ENCODE measurements at regions of chr10 and their contacts with region 1.

Region 1: GRCh38 chr10:88990384-88991160 is at the start of gene FAS:
- DNase-seq: peak; percentile 96
- H3K4me3 Mint-ChIP-seq: peak within 1 kb of the TSS; percentile 92
- H3K27ac Mint-ChIP-seq: peak within 1 kb of the TSS; percentile 98
- H3K4me1 Mint-ChIP-seq: peaks cover 46% of the 10 kb centered on the region
- H3K27me3 Mint-ChIP-seq: no peaks in the 10 kb centered on the region
- total RNA-seq, gene FAS: 69.3 to 72.9 TPM

Region 2: DNA sequence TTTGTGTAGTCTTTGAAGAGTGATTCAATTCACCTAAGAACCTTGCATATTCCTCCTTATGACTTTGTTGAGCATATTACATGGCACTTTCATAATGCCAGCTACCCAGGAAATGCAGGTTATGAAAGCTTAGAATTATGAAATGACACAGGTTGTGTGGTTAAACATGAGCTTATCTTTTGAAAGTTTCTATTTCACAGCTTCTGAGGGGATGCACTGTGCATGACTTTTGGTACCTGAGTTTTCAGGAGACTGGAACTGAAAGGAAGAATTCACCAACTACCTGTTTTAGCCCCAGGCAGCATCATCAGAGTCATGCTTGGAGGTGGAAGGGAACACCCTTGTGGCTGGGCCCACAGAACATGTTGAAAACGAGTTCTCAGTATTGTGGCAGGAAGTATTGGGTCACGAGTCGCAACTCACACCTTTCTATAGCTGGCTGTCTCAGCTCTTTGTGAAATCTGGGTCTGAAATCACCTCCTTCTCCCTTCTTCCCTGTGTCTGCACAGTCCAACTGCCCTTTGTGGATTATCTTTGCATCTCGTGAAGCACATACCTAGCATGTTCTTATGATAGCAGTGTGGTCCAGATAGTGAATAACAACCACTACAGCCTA is 899.0 kb before region 1 on chr10:
- CTCF ChIA-PET with region 1: no interaction called
- intact Hi-C with region 1: loop called (anchors 1 kb)
- DNase-seq: peak; percentile 91
- H3K4me3 Mint-ChIP-seq: no peak overlapping the region
- H3K27ac Mint-ChIP-seq: no peak overlapping the region
- H3K4me1 Mint-ChIP-seq: peaks cover 34% of the 10 kb centered on the region
- H3K27me3 Mint-ChIP-seq: peaks cover 19% of the 10 kb centered on the region

Region 3: GRCh38 chr10:88848499-88848898 is 142.1 kb before region 1 on chr10:
- CTCF ChIA-PET with region 1: interaction called, 3 read pairs
- intact Hi-C with region 1: loop called (anchors 1 kb)
- DNase-seq: no peak
- H3K4me3 Mint-ChIP-seq: no peak overlapping the region
- H3K27ac Mint-ChIP-seq: peak overlapping the region; percentile 25
- H3K4me1 Mint-ChIP-seq: peaks cover 13% of the 10 kb centered on the region
- H3K27me3 Mint-ChIP-seq: peaks cover 12% of the 10 kb centered on the region

Region 4: DNA sequence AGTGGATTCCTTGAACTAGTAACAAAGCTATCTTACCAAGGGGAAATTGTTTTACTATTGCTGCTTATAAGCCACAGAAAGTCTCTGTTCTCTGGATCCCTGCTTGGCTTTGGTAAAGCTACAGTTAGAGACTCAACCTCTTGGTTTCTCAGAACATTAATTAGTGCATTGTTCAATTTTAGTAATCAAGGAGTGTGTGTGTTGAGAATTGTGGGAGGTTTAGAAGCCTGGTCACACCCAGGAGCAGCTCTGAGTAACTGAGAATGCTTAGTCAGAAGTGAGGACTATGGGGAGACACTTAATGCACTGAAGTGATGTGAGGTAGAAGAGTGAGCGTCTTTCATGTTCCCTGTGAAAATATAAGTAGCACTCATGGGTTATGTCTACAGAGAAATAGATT is 29.8 kb before region 1 on chr10:
- CTCF ChIA-PET with region 1: interaction called, 4 read pairs
- intact Hi-C with region 1: loop called (anchors 1 kb)
- DNase-seq: peak; percentile 32
- H3K4me3 Mint-ChIP-seq: no peak overlapping the region
- H3K27ac Mint-ChIP-seq: no peak overlapping the region
- H3K4me1 Mint-ChIP-seq: peaks cover 24% of the 10 kb centered on the region
- H3K27me3 Mint-ChIP-seq: no peaks in the 10 kb centered on the region

Region 5: DNA sequence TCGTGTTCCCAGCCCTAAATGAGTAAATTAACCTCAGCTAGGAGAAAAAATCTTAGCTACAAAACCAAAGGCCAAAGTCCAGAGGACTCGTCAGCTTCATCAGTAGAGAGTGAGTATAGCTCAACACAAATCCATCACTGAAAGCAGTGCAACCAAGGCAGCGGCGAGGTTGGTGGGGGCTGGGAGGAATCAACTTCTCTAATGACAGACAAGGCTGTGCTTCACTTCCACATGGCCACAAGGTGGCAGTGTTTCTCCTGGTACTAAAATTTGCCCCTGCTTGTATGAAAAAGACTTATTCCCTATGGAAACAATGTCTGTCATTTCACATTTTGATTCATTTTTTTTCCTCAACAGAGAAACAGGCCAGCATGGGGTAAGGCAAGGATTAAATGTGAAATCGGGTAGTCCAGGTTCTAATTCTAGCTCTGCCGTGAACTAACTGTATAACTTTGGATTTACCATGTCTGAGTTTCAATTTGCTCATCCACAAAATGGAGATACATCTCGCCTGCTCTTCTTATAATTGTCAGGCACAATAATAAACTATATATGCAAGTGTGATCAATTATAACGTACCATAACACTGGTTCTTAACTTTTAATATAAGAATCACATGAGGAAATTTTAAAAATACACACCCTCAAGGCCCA is 39.3 kb after region 1 on chr10:
- CTCF ChIA-PET with region 1: interaction called, 9 read pairs
- intact Hi-C with region 1: loop called (anchors 2 kb)
- DNase-seq: peak; percentile 85
- H3K4me3 Mint-ChIP-seq: no peak overlapping the region
- H3K27ac Mint-ChIP-seq: no peak overlapping the region
- H3K4me1 Mint-ChIP-seq: peaks cover 22% of the 10 kb centered on the region
- H3K27me3 Mint-ChIP-seq: no peaks in the 10 kb centered on the region

Region 6: DNA sequence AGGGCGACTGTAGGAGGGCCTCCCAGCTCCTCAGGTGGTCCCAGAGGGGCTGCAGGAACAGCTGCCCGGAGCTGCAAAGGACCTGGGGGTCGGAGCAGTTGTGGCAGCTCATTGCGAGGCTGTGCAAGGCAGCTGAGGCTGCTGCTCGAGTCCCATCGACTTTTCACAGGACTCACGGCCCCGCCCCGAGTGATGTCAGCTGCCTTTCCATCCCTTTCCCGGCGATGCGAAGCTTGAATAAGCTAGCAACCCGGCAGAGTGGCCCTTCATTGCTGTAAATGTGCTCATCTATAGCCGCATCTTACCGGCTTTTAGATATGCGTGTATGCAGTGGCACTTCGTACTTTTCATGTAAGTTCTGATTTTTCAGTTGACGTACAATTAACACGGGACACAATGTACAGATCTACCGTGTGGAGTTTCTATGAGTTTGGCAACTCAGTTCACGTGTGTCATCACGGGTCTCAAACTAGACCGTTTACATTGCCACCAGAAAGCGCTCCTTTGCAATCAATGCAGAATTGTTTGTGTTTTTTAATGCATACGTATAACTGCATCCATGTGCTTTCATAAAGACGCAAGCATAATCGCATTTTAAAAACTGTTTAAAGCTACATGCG is 216.7 kb after region 1 on chr10 and contains the start of gene CH25H:
- CTCF ChIA-PET with region 1: no interaction called
- intact Hi-C with region 1: loop called (anchors 1 kb)
- DNase-seq: peak; percentile 79
- H3K4me3 Mint-ChIP-seq: peak within 1 kb of the TSS; percentile 75
- H3K27ac Mint-ChIP-seq: no peak within 1 kb of the TSS
- H3K4me1 Mint-ChIP-seq: peaks cover 7% of the 10 kb centered on the region
- H3K27me3 Mint-ChIP-seq: peaks cover 39% of the 10 kb centered on the region
- total RNA-seq, gene CH25H: 0.12 to 0.22 TPM

Region 7: GRCh38 chr10:89701238-89702120 is 710.9 kb after region 1 on chr10 and contains the start of gene KIF20B:
- CTCF ChIA-PET with region 1: no interaction called
- intact Hi-C with region 1: loop called (anchors 1 kb)
- DNase-seq: peak; percentile 97
- H3K4me3 Mint-ChIP-seq: peak within 1 kb of the TSS; percentile 90
- H3K27ac Mint-ChIP-seq: peak within 1 kb of the TSS; percentile 97
- H3K4me1 Mint-ChIP-seq: peaks cover 34% of the 10 kb centered on the region
- H3K27me3 Mint-ChIP-seq: no peaks in the 10 kb centered on the region
- total RNA-seq, gene KIF20B: 67.2 to 70.3 TPM

Measured in activated naive CD4-positive, alpha-beta T cell treated with anti-CD3 and anti-CD28 coated beads for 36 hours (primary cell).